Heart right ventricle (tissue), 16 donors: ENCODE measurements at regions of chr6 and their contacts with region 1.

Region 1: DNA sequence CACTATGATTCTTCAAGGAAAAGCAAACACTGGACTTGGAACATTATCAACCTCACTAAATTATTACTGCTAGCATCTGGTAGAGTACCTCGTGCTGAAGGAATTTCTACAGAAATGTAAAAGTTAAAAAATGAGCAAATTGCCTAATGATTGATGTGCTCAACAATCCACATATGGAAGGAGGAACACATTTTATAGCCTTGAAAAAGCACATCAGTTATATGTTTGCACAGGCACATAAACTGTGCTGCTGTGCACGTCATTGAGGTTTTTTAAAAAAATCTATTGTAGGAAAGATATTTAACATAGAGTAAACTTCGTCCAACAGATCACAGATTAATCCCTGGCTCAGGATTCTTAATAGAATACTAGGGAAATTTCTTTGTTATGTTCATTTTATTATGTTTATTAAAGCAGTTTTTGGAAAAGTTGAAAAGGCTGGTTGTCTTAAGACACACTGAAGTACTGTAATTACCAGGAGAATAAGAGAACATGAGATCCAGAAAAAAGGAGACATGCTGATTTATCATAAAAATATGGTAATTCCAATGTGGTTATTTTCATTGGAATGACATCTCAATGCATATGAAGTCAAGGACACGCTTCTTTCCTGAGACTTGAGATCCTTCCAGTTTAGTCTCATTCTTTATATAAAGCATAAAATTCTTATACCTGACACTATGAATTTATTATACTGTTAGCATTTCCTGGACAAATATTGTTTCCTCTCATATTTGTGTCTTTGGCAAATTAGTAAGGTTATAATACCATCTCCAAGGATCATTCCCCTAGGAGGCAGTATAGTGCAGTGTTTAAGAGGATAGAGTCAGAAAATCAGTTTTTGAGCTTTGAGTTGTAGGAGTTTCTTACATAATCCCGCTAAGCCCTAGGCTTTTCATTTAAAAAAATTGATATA is 511.1 kb downstream of the TENT5A start:
- DNase-seq: no peak
- ATAC-seq: no peak
- H3K4me3 ChIP-seq: no peak overlapping the region
- H3K27ac ChIP-seq: no peak overlapping the region
- H3K4me1 ChIP-seq: no peaks in the 10 kb centered on the region
- H3K27me3 ChIP-seq: no peaks in the 10 kb centered on the region
- CTCF ChIP-seq: peak in 8 of 9 donors; percentile 13 to 65 (median 48)

Region 2: DNA sequence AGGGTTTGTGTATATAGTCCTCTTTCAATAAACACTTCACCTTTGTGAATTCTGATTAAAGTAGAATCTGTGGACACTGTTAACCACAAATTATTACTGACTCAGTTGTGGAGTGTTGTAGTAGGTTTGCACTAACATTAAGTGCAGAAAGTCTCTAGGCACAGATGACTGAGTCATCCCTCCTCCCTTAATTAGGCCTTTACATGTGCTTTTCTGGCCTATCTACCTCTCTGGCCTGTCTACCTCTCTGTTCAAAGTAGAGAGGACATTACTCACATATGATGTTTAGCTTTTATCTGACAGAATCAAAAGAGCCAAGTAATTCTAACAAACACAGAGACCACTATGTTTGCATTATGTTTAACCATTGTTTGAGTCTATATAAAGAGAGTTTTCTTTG is 271.9 kb before region 1 on chr6:
- intact Hi-C with region 1: no loop called
- DNase-seq: no peak
- ATAC-seq: no peak
- H3K4me3 ChIP-seq: no peak overlapping the region
- H3K27ac ChIP-seq: no peak overlapping the region
- H3K4me1 ChIP-seq: no peaks in the 10 kb centered on the region
- H3K27me3 ChIP-seq: no peaks in the 10 kb centered on the region
- CTCF ChIP-seq: no peak

Region 3: GRCh38 chr6:81023007-81023582 is 218.3 kb before region 1 on chr6:
- intact Hi-C with region 1: no loop called
- DNase-seq: no peak
- ATAC-seq: no peak
- H3K4me3 ChIP-seq: no peak overlapping the region
- H3K27ac ChIP-seq: no peak overlapping the region
- H3K4me1 ChIP-seq: no peaks in the 10 kb centered on the region
- H3K27me3 ChIP-seq: no peaks in the 10 kb centered on the region
- CTCF ChIP-seq: no peak

Region 4: DNA sequence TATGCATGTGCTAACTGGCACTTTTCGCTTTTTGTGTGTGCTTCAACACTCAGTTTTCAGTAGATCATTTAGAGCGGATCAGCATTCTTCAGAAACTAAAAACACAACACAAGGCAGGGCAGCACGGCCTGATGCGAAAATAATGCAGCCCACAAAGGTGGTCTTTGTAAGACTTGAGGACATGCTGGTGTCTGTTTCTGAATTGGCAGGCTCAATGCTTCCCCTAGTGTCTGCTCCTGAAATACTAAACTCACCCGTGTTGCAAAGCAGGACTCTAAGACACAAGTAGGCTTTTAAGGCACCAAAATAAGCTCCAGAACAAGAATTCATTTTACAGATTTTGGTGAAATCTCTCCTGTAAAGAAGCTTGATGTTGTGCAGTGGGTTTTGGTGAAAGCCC is 165.4 kb before region 1 on chr6:
- intact Hi-C with region 1: no loop called
- DNase-seq: no peak
- ATAC-seq: no peak
- H3K4me3 ChIP-seq: no peak overlapping the region
- H3K27ac ChIP-seq: no peak overlapping the region
- H3K4me1 ChIP-seq: no peaks in the 10 kb centered on the region
- H3K27me3 ChIP-seq: no peaks in the 10 kb centered on the region
- CTCF ChIP-seq: peak in 8 of 9 donors; percentile 13 to 55 (median 44)

Region 5: GRCh38 chr6:81451787-81452186 is 210.4 kb after region 1 on chr6:
- intact Hi-C with region 1: loop called in 1 of 10 experiments (anchors 10 kb)
- DNase-seq: no peak
- ATAC-seq: peak in 6 of 8 donors; percentile 59 to 98 (median 88)
- H3K4me3 ChIP-seq: no peak overlapping the region
- H3K27ac ChIP-seq: no peak overlapping the region
- H3K4me1 ChIP-seq: no peaks in the 10 kb centered on the region
- H3K27me3 ChIP-seq: no peaks in the 10 kb centered on the region
- CTCF ChIP-seq: no peak

Region 6: DNA sequence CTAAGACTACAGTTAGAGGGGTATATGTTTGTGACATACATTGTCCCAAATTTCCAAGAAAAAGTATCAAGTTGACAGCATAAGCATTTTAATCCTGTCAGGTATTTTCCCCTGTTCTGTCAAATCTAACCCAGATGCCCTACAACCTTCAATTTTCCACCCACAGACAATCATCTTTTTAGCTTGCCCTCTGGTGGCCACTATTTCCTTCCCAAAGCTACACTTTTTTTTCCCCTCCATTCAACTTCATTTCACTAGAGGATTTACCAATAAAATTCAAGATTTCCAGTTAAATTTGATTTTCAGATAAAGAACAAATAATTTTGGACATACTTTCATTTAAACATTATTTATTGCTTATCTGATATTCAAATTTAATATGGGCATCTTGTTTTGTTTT is 224.5 kb after region 1 on chr6:
- intact Hi-C with region 1: loop called in 1 of 10 experiments (anchors 10 kb)
- DNase-seq: no peak
- ATAC-seq: no peak
- H3K4me3 ChIP-seq: no peak overlapping the region
- H3K27ac ChIP-seq: no peak overlapping the region
- H3K4me1 ChIP-seq: no peaks in the 10 kb centered on the region
- H3K27me3 ChIP-seq: no peaks in the 10 kb centered on the region
- CTCF ChIP-seq: peak in 7 of 9 donors; percentile 38 to 61 (median 47)